ENCODE measurements at regions of chr14 and their contacts with region 1.

Region 1: DNA sequence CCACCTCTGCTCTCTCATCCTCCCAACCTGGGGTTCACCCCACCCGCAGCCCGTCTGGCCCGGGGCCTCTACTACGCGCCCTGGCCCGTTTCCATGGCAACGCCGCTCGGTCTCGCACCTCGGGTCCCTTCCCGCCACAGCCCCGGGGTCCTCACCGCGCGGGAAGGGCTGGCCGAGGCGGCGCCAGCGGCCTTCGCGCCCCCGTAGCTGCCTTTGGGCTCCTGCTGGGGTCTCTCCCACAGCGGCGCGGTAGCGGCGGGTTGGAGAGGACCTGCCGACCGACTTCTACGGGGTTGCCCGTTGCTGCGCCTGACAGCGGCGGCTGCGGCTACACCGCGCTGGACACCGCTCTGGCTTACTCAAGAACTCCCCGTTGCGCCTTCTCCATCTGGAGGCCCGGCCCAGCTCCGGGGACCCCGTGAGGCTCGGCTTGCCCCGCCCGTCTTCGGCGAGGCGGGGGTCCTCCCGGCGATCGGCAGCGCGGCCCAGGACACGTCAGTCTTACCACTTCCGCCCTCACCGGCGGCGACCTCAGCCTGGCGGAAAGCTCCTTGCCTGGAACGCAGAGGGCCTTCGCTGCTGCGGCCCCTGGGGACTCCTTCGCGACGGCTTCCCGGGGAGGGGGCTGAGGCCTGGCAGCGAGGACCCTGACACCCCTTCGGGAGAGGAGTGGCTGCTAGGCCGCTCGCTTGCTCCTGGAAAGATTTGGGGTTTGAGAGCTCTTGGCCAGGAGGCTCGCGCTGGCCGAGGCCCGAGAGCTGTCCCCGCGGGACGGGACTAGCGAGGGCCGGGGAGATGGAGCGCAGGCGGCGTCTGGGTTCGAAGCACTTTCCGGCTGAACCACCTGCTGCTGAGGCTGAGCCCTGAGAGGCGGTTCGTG is at the start of gene TM9SF1:
- DNase-seq: peak; percentile 91
- ATAC-seq: peak; percentile 90
- H3K4me3 Mint-ChIP-seq: peak within 1 kb of the TSS; percentile 95
- H3K27ac Mint-ChIP-seq: peak within 1 kb of the TSS; percentile 98
- H3K4me1 Mint-ChIP-seq: peaks cover 50% of the 10 kb centered on the region
- H3K27me3 Mint-ChIP-seq: no peaks in the 10 kb centered on the region
- CTCF ChIP-seq: no peak
- total RNA-seq, gene TM9SF1: 16.3 to 18.0 TPM

Region 2: GRCh38 chr14:24135834-24136542 is 59.4 kb before region 1 on chr14 and contains the start of gene PSME1:
- CTCF ChIA-PET with region 1: no interaction called
- POLR2A ChIA-PET with region 1: interaction called, 12 read pairs
- intact Hi-C with region 1: no loop called
- DNase-seq: peak; percentile 96
- ATAC-seq: peak; percentile 97
- H3K4me3 Mint-ChIP-seq: peak within 1 kb of the TSS; percentile 97
- H3K27ac Mint-ChIP-seq: peak within 1 kb of the TSS; percentile 92
- H3K4me1 Mint-ChIP-seq: peaks cover 56% of the 10 kb centered on the region
- H3K27me3 Mint-ChIP-seq: no peaks in the 10 kb centered on the region
- CTCF ChIP-seq: no peak
- total RNA-seq, gene PSME1: 451 to 460 TPM

Region 3: DNA sequence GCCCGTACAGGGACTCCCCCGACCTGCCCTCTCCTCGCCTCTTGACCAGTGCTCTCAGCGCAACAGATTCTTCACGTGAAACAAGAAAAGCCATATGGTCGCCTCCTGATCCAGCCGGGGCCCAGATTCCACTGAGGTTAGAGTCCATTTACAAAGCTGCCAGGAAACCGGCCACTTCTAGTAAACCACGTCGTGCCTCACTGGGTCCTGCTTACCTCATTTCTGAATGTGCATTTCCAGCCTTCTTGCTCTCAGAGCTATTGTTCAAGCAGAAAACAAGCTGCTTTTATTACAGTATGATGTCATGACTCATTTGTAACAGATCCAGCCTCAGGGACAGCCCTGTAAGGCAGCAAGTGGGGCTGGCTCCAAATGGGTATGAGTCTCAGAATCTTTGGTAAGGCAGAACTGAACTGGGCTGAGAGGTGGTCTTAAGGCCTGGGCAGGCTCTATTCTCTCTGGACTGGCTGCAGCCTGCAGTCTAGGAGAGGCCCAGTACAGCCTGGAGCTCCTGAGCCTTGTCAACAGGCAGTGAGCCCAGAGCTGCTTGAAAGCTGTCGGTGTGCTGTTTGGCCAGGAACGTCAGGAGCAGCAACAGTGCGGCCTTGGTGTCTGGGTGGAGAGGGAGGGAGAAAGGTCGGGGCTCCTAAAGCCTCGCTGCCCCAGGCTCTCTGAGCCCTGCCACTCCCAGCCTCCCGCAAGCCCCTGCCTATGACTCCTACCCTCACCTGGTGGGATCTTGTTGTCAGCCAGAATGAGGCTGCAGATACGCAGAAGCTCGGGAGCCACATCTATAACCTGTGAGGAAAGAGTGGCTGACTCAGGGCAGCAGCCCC is 15.3 kb before region 1 on chr14:
- CTCF ChIA-PET with region 1: interaction called, 4 read pairs
- POLR2A ChIA-PET with region 1: interaction called, 163 read pairs
- intact Hi-C with region 1: no loop called
- DNase-seq: no peak
- ATAC-seq: no peak
- H3K4me3 Mint-ChIP-seq: no peak overlapping the region
- H3K27ac Mint-ChIP-seq: peak overlapping the region; percentile 5
- H3K4me1 Mint-ChIP-seq: peaks cover 2% of the 10 kb centered on the region
- H3K27me3 Mint-ChIP-seq: no peaks in the 10 kb centered on the region
- CTCF ChIP-seq: no peak

Region 4: GRCh38 chr14:24207104-24207551 is 11.7 kb after region 1 on chr14:
- CTCF ChIA-PET with region 1: no interaction called
- POLR2A ChIA-PET with region 1: interaction called, 58 read pairs
- intact Hi-C with region 1: no loop called
- DNase-seq: no peak
- ATAC-seq: peak; percentile 30
- H3K4me3 Mint-ChIP-seq: no peak overlapping the region
- H3K27ac Mint-ChIP-seq: peak overlapping the region; percentile 60
- H3K4me1 Mint-ChIP-seq: peaks cover 50% of the 10 kb centered on the region
- H3K27me3 Mint-ChIP-seq: no peaks in the 10 kb centered on the region
- CTCF ChIP-seq: no peak

Region 5: DNA sequence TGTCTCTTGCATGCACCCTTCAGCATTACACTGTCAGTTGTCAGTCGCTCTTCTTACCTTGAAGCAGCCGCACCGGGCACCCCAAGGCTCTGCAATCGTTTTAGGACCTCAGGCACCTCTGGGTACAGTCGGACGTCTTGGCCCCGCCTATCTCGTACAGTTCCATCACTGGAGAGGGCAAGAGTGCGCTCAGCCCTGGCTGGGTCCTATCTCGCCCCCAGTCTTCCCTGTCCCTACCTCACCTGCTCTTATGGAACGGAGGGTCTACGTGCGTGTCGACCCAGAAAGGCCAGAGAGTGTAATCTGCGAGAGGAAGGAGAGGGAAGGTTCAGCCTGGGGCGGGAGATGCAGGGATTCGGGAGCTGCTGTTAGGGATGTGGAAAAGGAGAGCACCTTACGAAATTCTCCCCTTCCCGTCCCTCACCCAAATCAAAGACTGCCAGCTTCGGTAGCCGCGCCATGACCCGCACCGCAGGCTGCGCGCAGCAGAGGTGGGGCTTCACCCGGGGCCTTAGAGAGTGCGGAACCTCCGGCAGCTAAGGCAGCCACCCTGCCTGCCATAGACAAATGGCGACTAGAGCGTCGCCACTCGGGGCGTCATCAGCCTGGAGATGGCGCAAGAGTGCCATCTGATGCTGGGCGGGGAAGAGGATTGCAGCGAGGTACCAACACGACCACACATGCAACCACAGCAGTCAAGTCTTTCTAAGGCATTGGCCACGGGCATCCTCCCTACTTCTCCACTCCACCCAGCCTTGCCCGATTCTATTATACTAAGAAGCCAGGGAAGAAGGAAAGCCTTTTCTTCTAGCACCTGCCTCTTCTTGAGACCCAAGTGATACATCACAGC is 20.3 kb after region 1 on chr14 and contains the start of gene MDP1:
- CTCF ChIA-PET with region 1: interaction called, 13 read pairs
- POLR2A ChIA-PET with region 1: interaction called, 58 read pairs
- intact Hi-C with region 1: no loop called
- DNase-seq: peak; percentile 91
- ATAC-seq: peak; percentile 74
- H3K4me3 Mint-ChIP-seq: peak within 1 kb of the TSS; percentile 97
- H3K27ac Mint-ChIP-seq: peak within 1 kb of the TSS; percentile 98
- H3K4me1 Mint-ChIP-seq: peaks cover 40% of the 10 kb centered on the region
- H3K27me3 Mint-ChIP-seq: no peaks in the 10 kb centered on the region
- CTCF ChIP-seq: peak; percentile 45
- total RNA-seq, gene MDP1: 11.2 to 11.3 TPM

Region 6: DNA sequence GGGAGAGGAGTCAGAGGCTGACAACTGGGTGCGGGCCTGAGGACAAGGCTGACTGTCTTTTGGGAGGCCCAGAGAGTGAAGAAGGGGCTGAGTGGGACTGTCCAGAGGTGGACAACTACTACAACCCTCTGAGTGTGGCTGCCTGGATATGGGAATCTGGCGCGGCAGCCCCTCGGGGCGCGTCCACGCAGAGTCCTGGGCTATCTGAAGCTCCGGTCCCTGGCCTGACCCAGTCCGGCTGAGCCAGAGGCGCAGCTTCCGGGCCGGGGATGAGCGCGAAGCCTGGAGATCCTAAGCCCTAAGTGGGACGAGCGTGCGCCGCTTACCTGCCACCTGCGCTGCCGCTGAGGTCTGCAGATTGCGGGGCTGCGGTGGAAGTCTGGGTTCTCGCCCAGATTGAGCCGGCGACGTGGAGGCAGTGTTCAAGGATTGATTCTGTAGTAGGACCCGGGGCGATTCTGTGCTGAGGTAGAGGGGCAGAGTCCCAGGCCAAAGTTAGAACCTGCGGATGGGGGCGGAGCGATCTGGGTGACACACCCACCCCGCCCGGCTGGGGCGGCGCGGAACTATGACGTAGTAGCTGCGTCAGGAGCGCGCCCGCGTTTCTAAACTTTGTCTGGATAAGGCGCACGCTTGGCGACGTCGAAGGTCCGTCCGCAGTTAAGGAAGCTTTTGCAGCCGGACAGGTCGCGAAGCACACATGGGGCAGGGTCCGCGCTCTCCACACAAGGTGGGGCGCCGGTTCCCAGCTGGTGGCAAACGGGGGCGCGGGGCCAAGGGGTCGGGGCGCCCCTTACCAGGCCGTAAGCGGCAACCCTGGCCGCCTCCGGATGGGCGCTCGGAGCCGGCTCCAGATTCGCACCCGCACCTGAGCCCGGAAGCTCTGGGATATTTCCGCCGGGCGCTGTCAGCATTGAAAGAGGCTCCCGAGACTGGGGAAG is 104.1 kb after region 1 on chr14 and contains the starts of genes DHRS1 and NOP9:
- CTCF ChIA-PET with region 1: interaction called, 15 read pairs
- POLR2A ChIA-PET with region 1: interaction called, 6 read pairs
- intact Hi-C with region 1: no loop called
- DNase-seq: peak; percentile 94
- ATAC-seq: peak; percentile 76
- H3K4me3 Mint-ChIP-seq: peak within 1 kb of the TSS; percentile 89
- H3K27ac Mint-ChIP-seq: peak within 1 kb of the TSS; percentile 88
- H3K4me1 Mint-ChIP-seq: peaks cover 40% of the 10 kb centered on the region
- H3K27me3 Mint-ChIP-seq: no peaks in the 10 kb centered on the region
- CTCF ChIP-seq: no peak
- total RNA-seq, gene DHRS1: 11.9 to 13.6 TPM
- total RNA-seq, gene NOP9: 33.5 to 33.6 TPM